ENCODE measurements at regions of chr15 and their contacts with region 1.

Region 1: GRCh38 chr15:52179278-52180195 is 11.7 kb downstream of the GNB5 start:
- DNase-seq: no peak
- H3K4me3 ChIP-seq: peak overlapping the region; percentile 82
- H3K27me3 ChIP-seq: no peaks in the 10 kb centered on the region
- CTCF ChIP-seq: no peak

Region 2: DNA sequence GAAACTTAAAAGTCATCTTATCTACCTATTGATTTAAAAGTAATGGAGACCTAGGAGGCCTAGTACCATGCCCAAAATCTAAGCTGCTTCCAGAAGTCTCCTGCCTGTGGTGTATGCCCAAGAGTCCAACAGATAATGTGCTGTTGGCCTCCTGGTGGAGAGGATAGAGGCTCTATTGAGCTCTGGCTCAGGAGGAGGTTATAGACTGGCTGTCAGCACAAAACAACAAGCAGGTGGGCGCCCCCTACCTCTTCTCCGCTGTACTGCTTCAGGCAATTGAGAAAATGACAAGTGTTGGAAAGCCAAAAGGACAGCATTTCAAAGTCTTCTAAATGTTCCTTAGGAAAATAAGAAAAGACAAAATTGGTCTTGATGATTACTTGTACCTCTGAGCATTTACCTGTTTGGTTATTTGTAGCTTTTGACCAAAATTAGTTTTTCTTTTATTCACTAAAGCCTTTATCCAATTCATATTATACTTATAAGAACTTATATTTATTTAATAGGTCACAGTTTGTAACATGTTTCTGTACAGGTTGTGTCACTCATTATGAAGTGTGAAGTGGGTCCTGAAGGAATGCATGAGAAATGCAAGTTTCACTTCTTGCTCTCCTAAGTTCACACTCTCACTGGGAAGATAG is 28.9 kb after region 1 on chr15:
- CTCF ChIA-PET with region 1: interaction called, 29 read pairs
- POLR2A ChIA-PET with region 1: no interaction called
- DNase-seq: no peak
- H3K4me3 ChIP-seq: no peak overlapping the region
- H3K27me3 ChIP-seq: no peaks in the 10 kb centered on the region
- CTCF ChIP-seq: peak; percentile 82